Naive thymus-derived CD8-positive, alpha-beta T cell (primary cell): ENCODE measurements at regions of chr22 and their contacts with region 1.

Region 1: GRCh38 chr22:20116951-20117645 is at the start of gene TRMT2A:
- DNase-seq: peak; percentile 93 to 97 (median 95)
- ATAC-seq: peak; percentile 81
- H3K4me3 Mint-ChIP-seq: peak within 1 kb of the TSS; percentile 83 to 97 (median 90)
- H3K27ac Mint-ChIP-seq: peak within 1 kb of the TSS; percentile 79 to 96 (median 94)
- H3K4me1 Mint-ChIP-seq: peaks cover 14 to 57% (median 39%) of the 10 kb centered on the region in 4 donors
- H3K27me3 Mint-ChIP-seq: no peaks in the 10 kb centered on the region
- polyA plus RNA-seq, gene TRMT2A: 24.8 to 36.8 (median 32.5) TPM

Region 2: GRCh38 chr22:19986410-19987341 is 130.4 kb before region 1 on chr22:
- POLR2A ChIA-PET with region 1: no interaction called
- DNase-seq: peak; percentile 27 to 76 (median 56)
- ATAC-seq: peak; percentile 82 to 94
- H3K4me3 Mint-ChIP-seq: peak overlapping the region; percentile 53 to 80 (median 65)
- H3K27ac Mint-ChIP-seq: no peak overlapping the region
- H3K4me1 Mint-ChIP-seq: peaks cover 3 to 12% (median 9%) of the 10 kb centered on the region in 4 donors
- H3K27me3 Mint-ChIP-seq: no peaks in the 10 kb centered on the region

Region 3: DNA sequence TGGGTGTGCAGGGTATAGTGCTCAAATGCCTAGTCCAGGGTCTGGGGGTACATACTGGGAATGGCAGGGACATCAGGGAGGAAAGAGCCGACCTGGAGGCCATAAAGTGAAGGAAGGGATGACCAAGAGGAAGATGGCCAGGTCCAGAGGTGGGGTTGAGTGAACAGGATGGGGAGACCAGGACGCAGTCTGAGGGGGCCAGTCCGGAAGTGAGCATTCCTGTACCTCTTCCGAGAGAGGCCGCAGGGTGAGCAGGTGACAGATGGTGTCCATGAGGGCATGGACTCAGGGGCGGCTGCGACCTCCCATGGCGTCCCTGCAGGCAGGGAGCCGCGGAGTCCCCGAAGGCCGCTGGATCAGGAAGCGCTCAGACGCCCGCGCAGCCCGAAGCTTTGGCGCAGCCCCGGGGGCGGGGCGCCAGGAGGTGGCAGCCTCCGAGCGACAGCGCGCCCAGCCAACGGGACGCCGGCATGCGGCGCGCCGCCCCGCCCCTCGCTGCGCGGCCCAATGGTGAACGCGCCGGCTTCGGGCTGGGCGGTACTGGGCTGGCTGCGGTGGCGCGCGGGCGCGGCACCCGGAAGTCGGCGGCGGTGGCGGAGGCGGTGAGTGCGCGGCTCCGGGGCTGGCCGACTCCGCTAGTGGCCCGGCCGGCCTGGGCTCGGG is 96.4 kb before region 1 on chr22 and contains the start of gene TANGO2:
- POLR2A ChIA-PET with region 1: interaction called, 23 read pairs
- DNase-seq: peak; percentile 88 to 97 (median 93)
- ATAC-seq: peak; percentile 86 to 91
- H3K4me3 Mint-ChIP-seq: peak within 1 kb of the TSS; percentile 87 to 94 (median 88)
- H3K27ac Mint-ChIP-seq: peak within 1 kb of the TSS; percentile 81 to 96 (median 94)
- H3K4me1 Mint-ChIP-seq: peaks cover 19 to 58% (median 53%) of the 10 kb centered on the region in 4 donors
- H3K27me3 Mint-ChIP-seq: no peaks in the 10 kb centered on the region
- polyA plus RNA-seq, gene TANGO2: 22.6 to 36.2 (median 26.4) TPM

Region 4: GRCh38 chr22:20079745-20080444 is 37.2 kb before region 1 on chr22 and contains the start of gene DGCR8:
- POLR2A ChIA-PET with region 1: interaction called, 16 read pairs
- DNase-seq: peak in 9 of 10 donors; percentile 51 to 79 (median 72)
- ATAC-seq: peak; percentile 91 to 92
- H3K4me3 Mint-ChIP-seq: peak within 1 kb of the TSS; percentile 74 to 98 (median 92)
- H3K27ac Mint-ChIP-seq: peak within 1 kb of the TSS; percentile 48 to 98 (median 88)
- H3K4me1 Mint-ChIP-seq: peaks cover 24 to 44% (median 43%) of the 10 kb centered on the region in 4 donors
- H3K27me3 Mint-ChIP-seq: no peaks in the 10 kb centered on the region
- polyA plus RNA-seq, gene DGCR8: 4.0 to 6.0 (median 4.4) TPM

Region 5: DNA sequence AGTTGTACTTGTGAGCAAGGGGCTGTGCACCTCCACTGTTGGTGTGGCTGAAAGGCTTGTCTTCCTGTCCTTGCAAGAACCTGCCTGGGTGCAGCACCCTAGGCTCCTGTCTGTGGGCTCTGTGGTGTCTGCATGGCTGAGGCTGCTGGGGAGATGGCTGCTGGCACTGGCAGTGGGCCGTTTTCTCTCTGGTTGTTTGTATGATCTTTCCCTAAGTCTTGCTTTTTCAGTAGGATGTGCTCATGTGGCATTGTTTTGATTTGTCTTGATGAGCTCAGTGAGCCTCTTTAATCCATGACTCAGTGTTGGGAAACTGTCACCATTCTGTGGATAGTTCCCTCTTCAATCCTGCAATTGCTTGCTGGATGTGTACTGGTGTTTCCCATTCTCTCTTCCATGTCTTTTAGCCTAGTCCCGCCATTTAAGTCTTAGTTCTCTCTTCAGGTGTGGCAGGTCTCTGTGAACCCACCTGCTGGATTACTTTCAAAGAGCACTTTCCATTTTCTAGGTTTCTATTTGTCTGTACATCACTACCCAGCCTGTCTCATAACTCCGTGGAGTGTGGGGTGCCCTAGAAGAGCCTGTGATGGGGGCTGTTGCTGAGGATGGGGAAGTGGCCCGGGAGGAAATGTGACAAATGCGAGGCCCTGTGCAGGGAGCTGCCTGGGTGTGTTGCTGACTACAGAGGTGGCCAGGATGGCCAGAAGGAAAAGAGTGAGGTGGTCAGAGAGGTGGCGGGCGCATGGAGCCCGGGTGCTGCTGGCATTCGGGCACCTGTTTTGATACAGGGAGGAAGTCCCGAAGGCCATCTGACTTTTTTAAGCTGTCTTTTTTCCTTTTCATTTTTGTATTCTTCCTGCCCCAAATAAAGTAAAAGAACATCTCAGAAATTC is 26.5 kb before region 1 on chr22:
- POLR2A ChIA-PET with region 1: interaction called, 10 read pairs
- DNase-seq: no peak
- ATAC-seq: peak in 1 of 2 donors; percentile 28
- H3K4me3 Mint-ChIP-seq: peak overlapping the region in 8 of 10 donors; percentile 12 to 80 (median 52)
- H3K27ac Mint-ChIP-seq: peak overlapping the region; percentile 31 to 95 (median 84)
- H3K4me1 Mint-ChIP-seq: peaks cover 11 to 70% (median 51%) of the 10 kb centered on the region in 4 donors
- H3K27me3 Mint-ChIP-seq: no peaks in the 10 kb centered on the region

Region 6: DNA sequence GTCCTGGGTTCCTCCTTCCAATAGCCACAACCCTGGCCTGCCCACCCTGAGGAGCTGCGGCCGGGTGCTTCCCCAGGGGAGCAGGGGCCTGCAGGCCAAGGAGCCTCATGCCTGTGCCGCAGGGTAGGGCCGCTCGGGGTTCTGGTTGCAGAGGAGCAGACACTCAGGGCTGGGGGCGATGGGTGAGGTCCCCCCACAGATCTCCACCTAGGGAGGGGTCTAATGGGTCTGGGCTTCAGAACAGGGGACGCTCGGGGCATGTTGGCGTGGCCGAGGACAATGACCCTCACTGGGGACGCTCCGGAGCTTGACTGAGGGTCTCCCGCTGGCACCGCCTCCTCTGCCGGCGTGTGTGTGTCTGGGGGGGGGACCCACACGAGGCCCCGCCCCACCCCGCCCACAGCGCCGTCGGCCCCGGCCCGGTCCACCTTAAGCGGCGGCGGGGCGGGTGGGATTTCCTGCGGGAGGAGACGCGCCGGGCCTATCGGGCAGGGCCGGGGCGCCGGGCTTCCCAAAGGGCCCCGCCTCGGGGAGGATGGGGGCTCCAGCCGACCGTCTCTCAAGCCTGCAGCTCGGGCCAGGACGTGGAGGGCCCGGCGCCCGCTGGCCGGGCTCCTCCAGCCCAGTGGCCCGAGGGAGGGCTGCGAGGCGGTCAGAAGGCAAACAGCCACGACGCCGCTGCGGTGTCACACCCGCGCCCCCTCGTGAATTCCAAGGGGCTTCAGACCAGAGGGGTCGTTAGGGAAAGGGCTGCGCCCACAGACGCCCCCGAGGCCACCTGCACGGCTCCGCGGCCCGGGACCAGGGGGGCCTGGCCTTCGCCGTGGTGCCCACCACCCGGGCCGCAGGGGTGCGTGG is 13.9 kb after region 1 on chr22:
- POLR2A ChIA-PET with region 1: interaction called, 14 read pairs
- DNase-seq: peak; percentile 68 to 88 (median 76)
- ATAC-seq: peak; percentile 81 to 83
- H3K4me3 Mint-ChIP-seq: peak overlapping the region; percentile 18 to 78 (median 64)
- H3K27ac Mint-ChIP-seq: peak overlapping the region in 6 of 10 donors; percentile 37 to 86 (median 76)
- H3K4me1 Mint-ChIP-seq: peaks cover 6 to 39% (median 28%) of the 10 kb centered on the region in 4 donors
- H3K27me3 Mint-ChIP-seq: no peaks in the 10 kb centered on the region

Region 7: DNA sequence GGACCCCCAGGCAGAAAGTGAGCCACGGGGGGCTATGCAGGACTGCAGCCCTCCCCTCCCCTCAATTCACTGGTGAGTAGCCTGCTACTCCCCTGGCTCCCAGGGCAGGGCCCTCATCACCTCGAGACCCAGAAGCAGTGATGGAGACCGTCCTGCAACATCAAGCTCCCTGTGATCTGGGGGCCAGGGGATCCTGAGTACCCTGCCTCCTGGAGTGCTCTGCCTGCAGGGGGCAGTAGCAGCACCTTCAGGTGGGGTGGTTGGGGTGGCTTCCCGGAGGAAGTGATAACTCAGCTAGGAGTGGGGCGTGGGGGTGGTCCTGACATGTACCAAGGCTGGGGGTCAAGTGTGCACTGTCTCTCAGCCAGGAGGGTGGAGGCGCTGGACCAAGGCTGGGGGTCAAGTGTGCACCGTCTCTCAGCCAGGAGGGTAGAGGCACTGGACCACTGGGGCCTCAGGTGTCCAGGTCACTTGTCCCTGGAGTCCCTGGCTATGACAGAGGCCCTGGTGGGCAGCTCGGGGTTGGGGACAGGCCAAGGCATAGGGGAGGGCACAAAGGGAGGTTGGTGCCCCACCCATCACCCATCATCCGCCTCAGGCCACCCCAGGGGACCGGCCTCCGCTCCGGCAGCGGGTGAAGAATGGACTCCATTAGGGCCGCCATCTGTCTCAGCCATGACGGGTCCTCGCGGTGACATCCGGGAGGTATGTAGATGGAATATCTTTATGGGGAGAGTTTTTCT is 141.7 kb after region 1 on chr22:
- POLR2A ChIA-PET with region 1: no interaction called
- DNase-seq: no peak
- ATAC-seq: no peak
- H3K4me3 Mint-ChIP-seq: no peak overlapping the region
- H3K27ac Mint-ChIP-seq: peak overlapping the region in 1 of 10 donors; percentile 12
- H3K4me1 Mint-ChIP-seq: peaks cover 8 to 15% (median 9%) of the 10 kb centered on the region in 4 donors
- H3K27me3 Mint-ChIP-seq: no peaks in the 10 kb centered on the region